ENCODE measurements at regions of chr3 and their contacts with region 1.

Region 1: GRCh38 chr3:49856181-49857005 is at the start of gene TRAIP:
- DNase-seq: peak; percentile 96
- H3K4me3 Mint-ChIP-seq: peak within 1 kb of the TSS; percentile 97
- H3K27ac Mint-ChIP-seq: peak within 1 kb of the TSS; percentile 72
- H3K4me1 Mint-ChIP-seq: peaks cover 13% of the 10 kb centered on the region
- H3K27me3 Mint-ChIP-seq: no peaks in the 10 kb centered on the region
- total RNA-seq, gene TRAIP: 22.7 to 25.3 TPM

Region 2: DNA sequence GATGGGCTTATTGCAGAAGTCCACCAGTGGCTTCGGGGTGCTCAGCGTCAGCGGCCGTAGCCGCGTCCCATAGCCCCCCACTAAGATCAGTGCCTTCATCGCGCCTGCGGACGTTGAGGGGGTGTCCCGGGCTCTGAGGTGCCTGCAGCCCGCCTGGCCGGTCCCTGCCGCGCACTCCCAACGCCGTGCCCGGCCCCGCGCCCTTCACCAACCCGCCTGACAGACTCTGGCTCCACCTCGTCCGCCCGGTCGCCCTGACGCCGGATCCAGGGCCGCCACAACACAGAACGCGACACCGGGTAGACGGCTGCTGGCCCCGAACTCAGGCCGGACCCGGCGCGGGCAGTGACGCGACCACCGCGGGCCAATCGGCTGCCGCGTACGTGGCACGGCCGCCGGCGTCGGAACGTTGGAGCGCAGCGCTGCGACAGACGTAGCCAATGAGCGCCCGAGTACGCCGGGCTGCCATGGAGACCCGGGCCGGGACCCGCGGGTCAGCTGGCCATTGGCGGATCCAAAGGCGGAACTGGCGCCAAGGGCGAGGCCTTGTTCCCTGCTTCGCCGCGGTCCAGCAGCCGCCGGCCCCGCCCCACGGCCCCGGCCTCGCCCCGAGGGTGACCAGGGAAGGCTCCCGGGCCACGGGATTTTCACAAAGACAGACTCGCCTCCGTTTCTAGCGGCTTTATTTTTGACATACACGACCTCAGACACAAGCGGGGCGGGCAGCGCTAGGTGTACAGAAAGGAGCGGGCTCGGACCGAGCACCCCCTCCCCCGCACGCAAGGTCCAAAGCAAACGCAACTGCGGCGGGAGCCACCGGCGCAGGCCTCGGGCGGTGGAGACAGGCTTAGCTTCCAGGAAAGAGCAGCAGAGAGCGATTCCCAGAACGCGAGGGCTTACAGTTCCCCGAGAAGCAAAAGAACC is 132.5 kb before region 1 on chr3 and contains the start of gene GMPPB:
- CTCF ChIA-PET with region 1: no interaction called
- POLR2A ChIA-PET with region 1: no interaction called
- intact Hi-C with region 1: loop called (anchors 5 kb)
- DNase-seq: peak; percentile 97
- H3K4me3 Mint-ChIP-seq: peak within 1 kb of the TSS; percentile 96
- H3K27ac Mint-ChIP-seq: peak within 1 kb of the TSS; percentile 98
- H3K4me1 Mint-ChIP-seq: peaks cover 29% of the 10 kb centered on the region
- H3K27me3 Mint-ChIP-seq: no peaks in the 10 kb centered on the region
- total RNA-seq, gene GMPPB: 41.0 to 45.4 TPM

Region 3: GRCh38 chr3:49786241-49786958 is 70.0 kb before region 1 on chr3 and contains the start of gene IP6K1:
- CTCF ChIA-PET with region 1: no interaction called
- POLR2A ChIA-PET with region 1: no interaction called
- intact Hi-C with region 1: loop called (anchors 5 kb)
- DNase-seq: peak; percentile 100
- H3K4me3 Mint-ChIP-seq: peak within 1 kb of the TSS; percentile 83
- H3K27ac Mint-ChIP-seq: peak within 1 kb of the TSS; percentile 89
- H3K4me1 Mint-ChIP-seq: peaks cover 21% of the 10 kb centered on the region
- H3K27me3 Mint-ChIP-seq: no peaks in the 10 kb centered on the region
- total RNA-seq, gene IP6K1: 28.8 to 29.3 TPM

Region 4: GRCh38 chr3:49906004-49906743 is 49.8 kb after region 1 on chr3:
- CTCF ChIA-PET with region 1: no interaction called
- POLR2A ChIA-PET with region 1: no interaction called
- intact Hi-C with region 1: loop called (anchors 1 kb)
- DNase-seq: peak; percentile 69
- H3K4me3 Mint-ChIP-seq: peak overlapping the region; percentile 18
- H3K27ac Mint-ChIP-seq: peak overlapping the region; percentile 83
- H3K4me1 Mint-ChIP-seq: peaks cover 22% of the 10 kb centered on the region
- H3K27me3 Mint-ChIP-seq: no peaks in the 10 kb centered on the region

Region 5: DNA sequence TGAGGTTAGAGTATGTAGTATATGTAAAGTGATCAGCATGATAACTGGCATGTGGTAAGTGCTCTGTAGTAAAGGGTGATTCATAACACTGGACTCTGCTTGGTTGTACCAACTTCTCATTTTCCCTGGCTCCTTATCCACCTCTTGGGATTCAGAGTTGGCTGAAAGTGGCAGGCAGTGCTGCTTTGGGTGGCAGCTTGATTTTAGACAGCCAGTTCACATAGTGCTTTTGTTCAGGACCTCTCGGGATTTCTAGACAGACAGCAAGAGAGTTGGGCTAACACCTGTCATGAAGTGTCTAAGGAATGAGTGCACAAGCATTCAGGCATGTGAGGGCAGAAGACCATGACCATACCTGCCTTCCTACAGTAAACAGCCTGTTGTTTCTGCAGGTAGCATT is 152.5 kb after region 1 on chr3:
- CTCF ChIA-PET with region 1: no interaction called
- POLR2A ChIA-PET with region 1: no interaction called
- intact Hi-C with region 1: no loop called
- DNase-seq: no peak
- H3K4me3 Mint-ChIP-seq: no peak overlapping the region
- H3K27ac Mint-ChIP-seq: no peak overlapping the region
- H3K4me1 Mint-ChIP-seq: no peaks in the 10 kb centered on the region
- H3K27me3 Mint-ChIP-seq: no peaks in the 10 kb centered on the region

Region 6: DNA sequence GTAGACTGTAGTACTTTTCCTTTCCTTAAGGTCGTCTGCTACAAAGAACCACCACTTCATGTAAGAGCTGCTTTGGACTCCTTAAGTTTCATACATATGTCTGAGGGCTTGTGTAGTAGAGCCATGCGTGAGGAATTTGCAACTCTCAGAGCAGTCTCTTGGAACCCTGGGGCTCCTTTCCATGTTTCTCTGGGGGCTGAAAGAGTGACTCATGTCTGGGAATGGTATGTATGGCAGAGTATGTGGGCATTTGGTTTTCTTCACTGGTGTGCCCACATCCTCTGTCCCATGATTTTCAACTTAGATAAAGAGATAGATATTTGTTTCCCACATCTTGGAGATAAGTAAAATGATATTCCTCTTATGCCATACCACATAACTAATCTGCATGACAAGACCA is 211.7 kb after region 1 on chr3:
- CTCF ChIA-PET with region 1: no interaction called
- POLR2A ChIA-PET with region 1: no interaction called
- intact Hi-C with region 1: no loop called
- DNase-seq: no peak
- H3K4me3 Mint-ChIP-seq: no peak overlapping the region
- H3K27ac Mint-ChIP-seq: no peak overlapping the region
- H3K4me1 Mint-ChIP-seq: no peaks in the 10 kb centered on the region
- H3K27me3 Mint-ChIP-seq: no peaks in the 10 kb centered on the region